GM12878 (cell line): ENCODE measurements at regions of chr17 and their contacts with region 1.

Region 1: GRCh38 chr17:18132711-18133110 is 24.2 kb downstream of the MYO15A start:
- DNase-seq: no peak
- ATAC-seq: no peak
- H3K4me3 ChIP-seq: no peak overlapping the region
- H3K27ac ChIP-seq: no peak overlapping the region
- H3K4me1 ChIP-seq: no peaks in the 10 kb centered on the region
- H3K27me3 ChIP-seq: no peaks in the 10 kb centered on the region; a peak in 1 of 4 replicates
- CTCF ChIP-seq: no peak
- EP300 ChIP-seq: no peak
- POLR2A ChIP-seq: no peak
- RAD21 ChIP-seq: no peak

Region 2: DNA sequence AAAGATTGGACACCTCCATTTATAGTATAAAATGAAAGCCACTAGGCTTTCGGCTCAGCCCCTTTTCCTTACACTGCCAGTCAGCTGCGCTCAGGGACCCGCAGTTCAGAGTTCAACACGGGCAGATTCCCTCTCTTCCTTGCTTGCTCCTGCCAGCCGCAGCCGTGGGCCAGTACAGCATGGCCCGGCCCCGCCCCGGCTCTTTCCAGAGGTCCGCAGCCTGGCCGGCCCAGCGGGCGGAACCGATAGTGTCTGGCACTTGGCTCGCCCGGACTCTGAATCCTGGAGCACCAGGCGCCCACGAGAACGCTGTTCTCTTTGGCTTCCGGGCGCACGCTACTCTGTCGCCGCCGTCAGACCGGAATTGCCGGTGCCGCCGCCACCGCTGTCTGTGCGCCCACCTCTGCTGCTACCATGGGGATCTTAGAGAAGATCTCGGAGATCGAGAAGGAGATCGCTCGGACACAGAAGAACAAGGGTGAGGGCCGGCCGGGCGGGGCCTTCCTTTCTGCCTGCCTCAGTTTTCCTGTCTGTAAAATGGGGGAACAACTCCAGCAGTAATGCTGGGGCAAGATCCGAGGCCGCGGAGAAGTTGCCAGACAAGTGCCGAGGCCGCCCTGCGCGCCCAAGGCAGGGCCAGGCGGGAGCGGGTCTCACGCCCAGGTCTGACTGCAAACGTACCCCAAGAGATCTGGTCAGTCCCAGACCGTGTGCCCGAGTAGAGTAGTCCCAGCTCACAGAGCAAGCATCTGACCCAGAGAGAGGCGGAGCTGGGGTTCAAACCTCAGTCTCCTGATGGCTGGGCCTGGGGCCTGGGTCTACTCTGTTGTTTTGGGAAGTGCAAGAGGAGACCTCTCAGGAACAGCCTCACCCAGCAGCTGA is 44.9 kb before region 1 on chr17 and contains the start of gene DRG2:
- CTCF ChIA-PET with region 1: no interaction called
- POLR2A ChIA-PET with region 1: no interaction called
- RAD21 ChIA-PET with region 1: no interaction called
- SMC1A ChIA-PET with region 1: interaction called, 5 read pairs
- in situ Hi-C with region 1: loop called (anchors 5 kb)
- intact Hi-C with region 1: no loop called
- DNase-seq: peak; percentile 65
- ATAC-seq: peak; percentile 97
- H3K4me3 ChIP-seq: peak within 1 kb of the TSS; percentile 90
- H3K27ac ChIP-seq: peak within 1 kb of the TSS; percentile 85
- H3K4me1 ChIP-seq: no peaks in the 10 kb centered on the region
- H3K27me3 ChIP-seq: no peaks in the 10 kb centered on the region
- CTCF ChIP-seq: 0 out of 6 replicates have a peak, but pooled peaks of 1 of the 3 experiments have one; percentile 5
- EP300 ChIP-seq: no peak
- POLR2A ChIP-seq: peak; percentile 93
- RAD21 ChIP-seq: no peak
- polyA plus RNA-seq, gene DRG2: 9.1 to 13.7 TPM